HepG2 (cell line): ENCODE measurements at regions of chr10 and their contacts with region 1.

Region 1: DNA sequence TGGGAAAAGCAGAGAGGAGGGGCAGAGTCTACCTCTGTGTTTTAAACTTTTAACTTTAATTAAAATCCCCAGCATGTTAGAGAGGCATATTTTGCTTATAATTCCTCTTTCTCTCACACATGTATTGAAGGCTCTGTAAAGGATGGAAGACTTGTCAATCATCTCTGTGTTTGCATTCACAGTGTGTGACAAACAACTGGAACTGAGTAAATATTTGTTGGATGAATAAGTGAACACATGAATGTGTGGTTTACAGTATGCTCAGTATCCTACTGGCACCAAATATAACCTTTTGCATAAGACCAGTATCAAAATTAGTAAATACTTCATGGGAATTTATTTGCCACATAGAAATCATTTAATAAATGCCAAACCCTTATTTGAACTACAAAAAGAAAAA is 829.0 kb downstream of the GRID1 start:
- DNase-seq: no peak
- ATAC-seq: no peak
- H3K4me3 ChIP-seq: no peak overlapping the region
- H3K27ac ChIP-seq: no peak overlapping the region
- H3K4me1 ChIP-seq: no peaks in the 10 kb centered on the region
- H3K27me3 ChIP-seq: no peaks in the 10 kb centered on the region
- CTCF ChIP-seq: no peak
- EP300 ChIP-seq: no peak
- POLR2A ChIP-seq: no peak
- RAD21 ChIP-seq: no peak

Region 2: DNA sequence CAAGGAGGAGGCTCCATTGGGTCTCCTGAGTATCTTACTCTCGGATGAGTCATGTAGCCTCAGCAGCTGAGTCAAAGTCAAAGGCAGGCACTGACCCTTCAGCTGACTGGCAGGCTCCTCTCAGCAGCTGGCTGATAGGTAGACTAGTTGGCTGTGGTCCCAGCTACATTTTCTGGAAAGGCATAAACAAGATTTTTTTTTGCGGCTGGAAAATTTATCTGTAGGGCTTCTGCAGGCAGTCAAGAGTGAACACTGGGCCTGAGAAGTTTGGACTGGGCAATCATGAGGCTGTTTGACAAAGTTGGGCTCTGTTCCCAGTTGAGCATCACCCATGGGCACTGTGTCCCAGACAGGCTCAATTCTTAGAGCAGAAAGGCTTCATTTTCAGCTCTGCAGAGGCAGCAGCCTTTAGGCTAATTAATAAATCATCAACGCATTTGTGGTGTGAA is 412.9 kb before region 1 on chr10:
- CTCF ChIA-PET with region 1: no interaction called
- POLR2A ChIA-PET with region 1: no interaction called
- in situ Hi-C with region 1: no loop called
- intact Hi-C with region 1: loop called (anchors 5 kb)
- DNase-seq: no peak
- ATAC-seq: no peak
- H3K4me3 ChIP-seq: no peak overlapping the region
- H3K27ac ChIP-seq: no peak overlapping the region
- H3K4me1 ChIP-seq: no peaks in the 10 kb centered on the region
- H3K27me3 ChIP-seq: no peaks in the 10 kb centered on the region
- CTCF ChIP-seq: no peak
- EP300 ChIP-seq: no peak
- POLR2A ChIP-seq: no peak
- RAD21 ChIP-seq: no peak